AG04449 (cell line): ENCODE measurements at regions of chr4 and their contacts with region 1.

Region 1: DNA sequence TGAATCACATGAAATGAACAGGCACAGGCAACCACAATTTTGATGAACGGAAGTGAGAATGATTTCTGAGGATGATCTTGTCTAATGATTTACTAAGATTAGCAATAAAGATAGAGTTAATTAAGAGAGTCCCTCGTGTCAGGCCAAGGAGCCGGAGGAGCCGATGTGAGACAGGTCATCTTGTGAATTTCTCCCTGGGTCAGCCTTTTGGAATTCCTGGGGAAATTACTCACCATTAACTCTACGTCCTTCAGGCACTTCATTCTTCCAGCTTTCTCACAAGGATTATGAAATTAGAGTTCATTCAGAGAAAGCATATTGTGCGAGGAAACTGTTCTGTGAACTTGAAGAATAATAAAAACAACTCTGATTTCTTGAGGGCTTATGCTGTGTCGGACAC is 86.7 kb downstream of the PSAPL1 start:
- DNase-seq: no peak
- H3K4me3 ChIP-seq: no peak overlapping the region
- CTCF ChIP-seq: no peak

Region 2: DNA sequence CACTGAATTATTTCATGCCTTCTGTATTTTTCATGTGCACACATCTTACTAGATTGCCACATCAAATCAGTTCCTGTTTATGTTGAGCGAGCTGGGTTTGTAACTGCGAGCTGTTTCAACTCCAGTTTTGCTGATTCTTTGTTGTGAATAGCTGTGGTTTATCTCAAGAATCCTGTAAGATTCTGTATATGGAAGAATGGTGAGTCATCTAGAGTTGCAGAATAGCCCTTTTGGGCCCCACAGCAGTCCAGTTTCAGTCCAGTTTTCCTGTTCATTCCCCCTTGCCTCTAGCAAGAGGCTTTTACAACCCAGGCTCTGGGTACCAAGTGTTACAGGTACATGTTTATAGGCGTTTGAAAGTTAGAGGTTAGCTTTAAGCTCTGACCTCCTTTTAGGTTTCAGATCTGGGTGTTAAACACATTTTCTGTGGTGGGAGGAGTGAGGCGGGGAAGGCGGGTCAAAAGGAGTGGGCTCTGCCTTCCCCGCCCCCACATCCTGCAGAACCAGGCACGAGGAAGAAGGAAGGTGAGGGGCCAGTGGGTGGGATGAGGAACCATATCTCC is 405.7 kb before region 1 on chr4:
- CTCF ChIA-PET with region 1: no interaction called
- POLR2A ChIA-PET with region 1: no interaction called
- DNase-seq: peak; percentile 95
- H3K4me3 ChIP-seq: peak overlapping the region; percentile 29
- CTCF ChIP-seq: no peak

Region 3: DNA sequence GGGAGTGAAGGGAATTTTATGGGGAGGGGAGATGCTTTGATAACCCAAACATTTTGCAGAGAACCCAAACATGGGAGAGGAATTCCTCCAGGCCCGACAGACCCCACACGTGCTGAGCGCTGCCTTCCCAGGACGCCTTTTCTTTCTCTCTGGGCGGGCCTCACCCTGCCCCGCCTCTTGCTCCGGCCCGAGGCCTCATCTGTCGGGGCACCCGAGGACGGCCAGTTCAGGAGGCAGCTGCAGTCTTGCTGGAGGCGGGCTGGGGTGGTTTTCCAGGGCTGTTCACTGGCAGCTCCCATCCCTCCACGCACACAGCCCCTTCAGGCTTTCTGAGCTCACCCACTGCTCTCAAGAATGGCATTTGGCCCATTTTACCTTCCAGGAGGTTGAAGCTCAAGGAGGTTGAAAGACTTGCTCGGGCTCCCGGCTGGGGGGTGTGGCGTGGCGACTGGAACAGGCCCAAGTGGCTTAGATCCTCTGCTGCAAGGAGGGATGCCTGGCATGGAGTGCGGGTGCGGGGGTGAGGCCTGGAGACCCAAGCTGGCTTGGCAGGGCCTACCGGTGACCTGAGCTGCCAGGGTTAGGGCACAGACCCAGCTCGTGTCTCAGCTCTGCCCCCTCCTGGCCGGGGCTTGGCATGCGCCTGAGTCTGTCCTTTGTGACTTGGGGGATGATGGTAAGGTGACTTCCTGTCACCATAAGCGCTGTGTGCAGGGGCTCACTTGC is 12.5 kb before region 1 on chr4:
- CTCF ChIA-PET with region 1: interaction called, 23 read pairs
- POLR2A ChIA-PET with region 1: no interaction called
- DNase-seq: no peak
- H3K4me3 ChIP-seq: no peak overlapping the region
- CTCF ChIP-seq: peak; percentile 87